Mammary epithelial cell (primary cell): ENCODE measurements at regions of chr12 and their contacts with region 1.

Region 1: GRCh38 chr12:72282721-72283120 is 10.6 kb downstream of the TRHDE start:
- DNase-seq: peak; percentile 51
- H3K4me3 ChIP-seq: no peak overlapping the region
- H3K27ac ChIP-seq: no peak overlapping the region
- H3K4me1 ChIP-seq: peaks cover 21% of the 10 kb centered on the region
- H3K27me3 ChIP-seq: no peaks in the 10 kb centered on the region
- CTCF ChIP-seq: peak; percentile 65 to 82

Region 2: DNA sequence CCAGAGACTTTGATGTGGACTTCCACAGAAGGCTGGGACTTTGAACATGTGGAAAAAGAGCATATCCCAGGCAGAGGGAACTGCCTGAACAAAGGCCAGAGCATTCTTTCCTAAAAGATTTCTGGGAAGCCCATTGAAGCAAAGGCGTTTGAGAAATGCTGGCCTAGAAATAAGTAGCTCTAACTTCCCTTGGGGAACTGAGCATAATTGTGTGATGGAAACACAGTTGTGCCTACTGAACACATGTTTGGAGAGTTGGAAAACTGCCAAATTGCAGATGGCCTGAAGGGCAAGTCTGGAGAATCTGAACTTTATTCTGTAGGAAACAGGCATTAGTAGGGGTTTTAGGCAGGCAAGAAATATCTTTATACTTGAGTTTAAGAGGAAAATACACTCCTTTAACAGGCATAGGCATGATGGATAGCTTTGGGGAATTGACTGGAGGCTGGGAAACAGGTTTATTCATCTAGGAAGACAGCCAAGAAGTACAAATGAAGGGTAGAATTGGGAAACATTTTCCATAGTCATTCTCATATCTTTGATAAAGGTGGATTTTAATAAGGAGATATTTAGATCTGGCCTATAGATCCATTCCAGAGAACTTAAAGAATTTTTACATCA is 210.0 kb before region 1 on chr12:
- CTCF ChIA-PET with region 1: no interaction called
- dilution Hi-C with region 1: no loop called
- in situ Hi-C with region 1: no loop called
- intact Hi-C with region 1: no loop called
- DNase-seq: peak; percentile 33
- H3K4me3 ChIP-seq: no peak overlapping the region
- H3K27ac ChIP-seq: no peak overlapping the region
- H3K4me1 ChIP-seq: peaks cover 13% of the 10 kb centered on the region
- H3K27me3 ChIP-seq: no peaks in the 10 kb centered on the region
- CTCF ChIP-seq: no peak

Region 3: GRCh38 chr12:72133497-72134055 is 149.1 kb before region 1 on chr12:
- CTCF ChIA-PET with region 1: no interaction called
- dilution Hi-C with region 1: no loop called
- in situ Hi-C with region 1: no loop called
- intact Hi-C with region 1: loop called (anchors 1 kb)
- DNase-seq: no peak
- H3K4me3 ChIP-seq: no peak overlapping the region
- H3K27ac ChIP-seq: no peak overlapping the region
- H3K4me1 ChIP-seq: no peaks in the 10 kb centered on the region
- H3K27me3 ChIP-seq: peaks cover 3% of the 10 kb centered on the region
- CTCF ChIP-seq: peak; percentile 14 to 30

Region 4: GRCh38 chr12:72264548-72265175 is 18.1 kb before region 1 on chr12:
- CTCF ChIA-PET with region 1: no interaction called
- dilution Hi-C with region 1: no loop called
- in situ Hi-C with region 1: no loop called
- intact Hi-C with region 1: loop called (anchors 1 kb)
- DNase-seq: no peak
- H3K4me3 ChIP-seq: no peak overlapping the region
- H3K27ac ChIP-seq: no peak overlapping the region
- H3K4me1 ChIP-seq: peaks cover 9% of the 10 kb centered on the region
- H3K27me3 ChIP-seq: no peaks in the 10 kb centered on the region
- CTCF ChIP-seq: peak; percentile 48 to 57

Region 5: DNA sequence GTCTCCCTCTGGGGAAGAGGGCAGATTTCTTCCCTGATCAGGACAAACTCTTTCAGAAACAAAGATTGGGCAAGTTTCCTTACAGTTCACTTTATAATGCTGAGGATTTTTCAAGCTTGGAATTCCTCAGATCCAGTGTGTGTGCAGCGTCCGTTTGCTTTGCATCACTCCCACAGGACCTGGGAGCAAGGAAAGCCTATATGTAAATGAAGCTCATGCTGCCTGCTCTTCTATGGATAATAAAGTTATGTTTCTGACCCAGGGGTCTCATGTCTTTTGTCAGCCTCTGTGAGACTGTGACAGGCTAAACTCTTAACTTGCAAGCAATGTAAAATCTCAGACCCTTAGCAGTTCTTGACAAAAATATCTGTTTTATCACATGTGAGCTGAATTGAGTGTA is 31.1 kb after region 1 on chr12:
- CTCF ChIA-PET with region 1: no interaction called
- dilution Hi-C with region 1: no loop called
- in situ Hi-C with region 1: no loop called
- intact Hi-C with region 1: no loop called
- DNase-seq: no peak
- H3K4me3 ChIP-seq: no peak overlapping the region
- H3K27ac ChIP-seq: no peak overlapping the region
- H3K4me1 ChIP-seq: no peaks in the 10 kb centered on the region
- H3K27me3 ChIP-seq: no peaks in the 10 kb centered on the region
- CTCF ChIP-seq: no peak

Region 6: GRCh38 chr12:72330301-72330700 is 47.6 kb after region 1 on chr12:
- CTCF ChIA-PET with region 1: no interaction called
- dilution Hi-C with region 1: no loop called
- in situ Hi-C with region 1: no loop called
- intact Hi-C with region 1: no loop called
- DNase-seq: no peak
- H3K4me3 ChIP-seq: no peak overlapping the region
- H3K27ac ChIP-seq: no peak overlapping the region
- H3K4me1 ChIP-seq: no peaks in the 10 kb centered on the region
- H3K27me3 ChIP-seq: no peaks in the 10 kb centered on the region
- CTCF ChIP-seq: no peak

Region 7: DNA sequence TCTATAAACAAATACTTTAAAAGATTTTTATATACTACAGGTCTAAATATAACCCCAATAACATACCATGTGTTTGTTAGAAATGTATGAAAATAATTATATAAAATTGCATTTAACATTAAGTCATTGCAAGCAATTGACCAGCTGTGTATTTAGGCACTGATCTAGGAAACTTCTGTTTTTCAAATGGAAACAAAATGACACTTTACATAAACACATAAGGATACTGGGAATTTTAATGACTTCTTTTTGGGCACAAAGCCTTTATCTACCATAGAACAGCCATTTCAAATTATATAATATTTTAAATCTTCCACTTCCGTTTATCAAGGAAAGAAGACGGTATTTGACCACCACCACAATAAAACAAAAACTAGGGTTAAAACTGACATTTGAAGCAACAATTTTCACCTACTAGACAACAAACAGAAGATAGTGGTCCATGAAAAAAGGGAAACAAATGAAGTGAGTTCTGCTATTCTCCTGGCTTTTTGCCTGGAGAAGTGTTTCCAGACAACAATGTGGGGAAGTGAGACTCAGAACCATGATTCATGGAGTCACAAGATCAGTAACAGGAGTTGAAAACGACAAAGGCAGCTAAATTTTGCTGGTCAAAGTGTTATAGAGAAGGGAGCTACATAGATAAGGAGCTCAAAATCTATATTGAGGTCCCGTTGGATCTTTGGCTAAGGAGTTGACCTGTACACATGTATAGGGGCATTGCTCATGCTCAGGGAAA is 464.6 kb after region 1 on chr12:
- CTCF ChIA-PET with region 1: no interaction called
- dilution Hi-C with region 1: no loop called
- in situ Hi-C with region 1: no loop called
- intact Hi-C with region 1: no loop called
- DNase-seq: peak; percentile 1
- H3K4me3 ChIP-seq: no peak overlapping the region
- H3K27ac ChIP-seq: no peak overlapping the region
- H3K4me1 ChIP-seq: no peaks in the 10 kb centered on the region
- H3K27me3 ChIP-seq: no peaks in the 10 kb centered on the region
- CTCF ChIP-seq: no peak